Activated CD4-positive, alpha-beta T cell treated with anti-CD3 and anti-CD28 coated beads, Interleukin-2, amount 10 ng/mL, durations not matched to agents 7 days and 5 days (primary cell): ENCODE measurements at regions of chr13 and their contacts with region 1.

Region 1: GRCh38 chr13:51286135-51287002 is 53.1 kb upstream of the SERPINE3 start:
- DNase-seq: peak; percentile 76
- H3K4me3 Mint-ChIP-seq: no peak overlapping the region
- H3K27ac Mint-ChIP-seq: no peak overlapping the region
- H3K4me1 Mint-ChIP-seq: peaks cover 15% of the 10 kb centered on the region
- H3K27me3 Mint-ChIP-seq: no peaks in the 10 kb centered on the region

Region 2: DNA sequence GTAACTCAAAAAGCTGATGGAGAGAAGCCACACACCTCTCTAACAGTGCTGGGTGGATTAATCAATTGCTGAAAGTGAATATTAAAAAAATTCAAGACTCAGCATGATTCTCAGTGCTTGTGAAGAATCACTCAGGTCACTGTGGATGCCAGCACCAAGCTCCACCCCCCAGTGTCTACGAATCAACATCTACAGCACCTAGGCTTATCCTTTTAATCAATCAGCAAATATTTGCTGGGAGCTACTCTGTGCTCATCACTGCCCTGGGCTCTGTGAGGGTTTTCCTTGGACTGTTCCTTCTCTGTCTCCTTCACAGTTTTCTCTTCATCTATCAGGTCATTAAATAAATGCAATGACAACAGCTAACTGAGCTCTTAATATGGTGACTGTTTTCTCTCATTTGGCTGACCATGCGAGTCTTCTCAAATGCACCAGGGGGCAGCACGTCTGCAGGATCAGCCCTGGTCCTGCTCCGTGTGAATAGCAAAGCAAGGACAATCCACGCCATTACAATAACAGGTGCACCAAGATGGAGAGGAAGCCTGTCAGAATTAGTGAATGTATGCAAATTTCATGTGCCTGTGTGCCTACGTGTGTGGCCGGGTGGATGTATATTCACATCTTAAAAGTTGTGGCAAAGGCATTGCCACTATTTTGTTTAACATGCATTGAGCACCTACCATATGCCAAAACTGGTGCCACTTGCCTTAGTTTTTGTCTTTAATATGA is 160.7 kb before region 1 on chr13:
- CTCF ChIA-PET with region 1: interaction called, 62 read pairs
- POLR2A ChIA-PET with region 1: no interaction called
- DNase-seq: peak; percentile 61
- H3K4me3 Mint-ChIP-seq: no peak overlapping the region
- H3K27ac Mint-ChIP-seq: no peak overlapping the region
- H3K4me1 Mint-ChIP-seq: peaks cover 7% of the 10 kb centered on the region
- H3K27me3 Mint-ChIP-seq: peaks cover 16% of the 10 kb centered on the region

Region 3: DNA sequence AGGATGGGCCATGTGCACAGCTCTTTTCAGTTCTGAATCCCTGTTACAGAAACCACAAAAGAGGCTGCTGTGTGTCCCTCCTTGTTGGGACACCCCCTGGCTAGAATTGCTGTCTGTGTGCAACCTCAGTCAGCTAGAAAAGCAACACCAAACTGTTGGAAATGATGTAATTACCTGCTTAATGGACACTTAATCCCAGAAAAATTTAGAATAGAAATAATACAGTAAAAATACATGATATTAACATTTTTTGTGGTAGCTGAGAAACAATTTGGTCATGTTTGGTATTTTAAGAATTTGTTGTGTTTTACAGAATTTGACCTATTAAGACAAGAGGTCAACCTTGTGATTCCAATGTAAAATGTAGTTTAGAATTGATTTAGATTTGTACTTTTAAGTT is 17.3 kb before region 1 on chr13:
- CTCF ChIA-PET with region 1: interaction called, 10 read pairs
- POLR2A ChIA-PET with region 1: no interaction called
- DNase-seq: no peak
- H3K4me3 Mint-ChIP-seq: no peak overlapping the region
- H3K27ac Mint-ChIP-seq: no peak overlapping the region
- H3K4me1 Mint-ChIP-seq: no peaks in the 10 kb centered on the region
- H3K27me3 Mint-ChIP-seq: no peaks in the 10 kb centered on the region

Region 4: DNA sequence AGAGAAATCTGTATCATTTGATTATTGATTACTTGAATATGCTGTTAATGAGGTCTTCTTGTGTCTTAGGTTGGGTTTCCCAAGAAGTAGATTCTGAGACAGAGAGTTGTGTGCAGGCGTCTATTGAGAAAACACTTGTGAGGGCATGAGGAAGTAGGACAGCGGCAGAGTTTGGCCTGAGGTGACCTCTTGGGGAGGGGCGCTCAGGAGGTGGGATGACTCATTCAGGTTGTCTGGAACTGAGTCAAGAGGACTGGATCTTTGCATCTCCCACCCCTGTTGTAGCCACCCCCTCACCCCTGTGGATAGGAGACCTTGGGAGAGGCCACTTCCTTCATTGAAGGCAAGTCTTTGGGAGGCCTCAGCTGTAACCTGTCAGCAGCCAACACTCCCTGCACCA is 262.7 kb after region 1 on chr13:
- CTCF ChIA-PET with region 1: no interaction called
- POLR2A ChIA-PET with region 1: no interaction called
- DNase-seq: no peak
- H3K4me3 Mint-ChIP-seq: no peak overlapping the region
- H3K27ac Mint-ChIP-seq: no peak overlapping the region
- H3K4me1 Mint-ChIP-seq: no peaks in the 10 kb centered on the region
- H3K27me3 Mint-ChIP-seq: peaks cover 2% of the 10 kb centered on the region